K562 (cell line): ENCODE measurements at regions of chr10 and their contacts with region 1.

Region 1: GRCh38 chr10:31782701-31783100 is 145.9 kb downstream of the ARHGAP12 start:
- DNase-seq: no peak
- ATAC-seq: no peak
- H3K4me3 ChIP-seq: no peak overlapping the region
- H3K27ac ChIP-seq: no peak overlapping the region
- H3K4me1 ChIP-seq: no peaks in the 10 kb centered on the region
- H3K27me3 ChIP-seq: no peaks in the 10 kb centered on the region; a peak in 2 of 5 replicates
- CTCF ChIP-seq: no peak
- EP300 ChIP-seq: no peak
- POLR2A ChIP-seq: no peak
- RAD21 ChIP-seq: no peak

Region 2: GRCh38 chr10:30736685-30737232 is 1045.9 kb before region 1 on chr10:
- CTCF ChIA-PET with region 1: no interaction called
- POLR2A ChIA-PET with region 1: no interaction called
- in situ Hi-C with region 1: loop called (anchors 25 kb)
- intact Hi-C with region 1: no loop called
- DNase-seq: no peak
- ATAC-seq: no peak
- H3K4me3 ChIP-seq: no peak overlapping the region
- H3K27ac ChIP-seq: no peak overlapping the region
- H3K4me1 ChIP-seq: no peaks in the 10 kb centered on the region
- H3K27me3 ChIP-seq: peaks cover 2 to 37% of the 10 kb centered on the region in 2 experiments; a peak in 3 of 5 replicates
- CTCF ChIP-seq: no peak
- EP300 ChIP-seq: no peak
- POLR2A ChIP-seq: no peak
- RAD21 ChIP-seq: no peak